Activated naive CD4-positive, alpha-beta T cell treated with anti-CD3 and anti-CD28 coated beads for 36 hours (primary cell): ENCODE measurements at regions of chr5 and their contacts with region 1.

Region 1: DNA sequence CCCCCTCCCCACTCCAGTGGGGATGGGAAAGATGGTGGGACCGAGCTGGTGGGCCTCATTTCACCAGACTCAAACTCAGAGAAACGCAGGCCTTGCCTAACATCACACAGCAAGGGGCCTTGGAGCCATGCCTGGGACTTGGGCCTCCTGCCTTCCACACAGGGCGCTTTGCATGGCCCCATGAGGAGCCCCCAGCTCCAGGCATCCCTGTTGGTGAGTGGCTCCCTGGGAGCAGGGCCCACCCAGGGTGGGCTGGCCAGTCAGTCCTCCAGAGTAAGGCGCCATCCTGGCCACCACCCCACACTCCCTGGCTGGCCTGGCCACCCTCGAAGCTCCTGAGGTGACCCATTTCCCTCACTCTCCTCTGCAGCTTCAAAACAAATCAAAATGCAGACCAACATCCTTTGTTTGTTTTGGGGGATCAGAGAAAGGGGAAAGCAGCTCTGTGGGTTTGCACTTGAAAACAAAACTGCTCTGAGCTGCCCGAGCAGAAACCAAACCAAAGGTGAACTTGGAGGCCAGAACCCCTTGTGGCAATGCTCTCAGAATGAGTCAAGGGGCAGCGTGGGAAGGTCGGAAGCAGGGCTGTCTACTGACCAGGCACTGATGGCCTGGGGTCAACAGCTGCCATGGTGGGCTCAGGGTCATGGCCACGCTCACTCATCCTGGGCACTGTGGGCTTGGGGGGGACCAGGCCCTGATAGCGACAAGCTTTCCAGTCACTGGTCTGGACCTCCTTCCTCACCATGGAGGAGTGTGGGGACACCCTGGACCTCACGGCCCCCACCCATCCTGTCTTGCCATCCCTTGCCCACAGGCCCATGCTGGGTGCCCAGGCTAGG is 37.0 kb upstream of the VDAC1 start:
- DNase-seq: no peak
- H3K4me3 Mint-ChIP-seq: no peak overlapping the region
- H3K27ac Mint-ChIP-seq: no peak overlapping the region
- H3K4me1 Mint-ChIP-seq: peaks cover 51% of the 10 kb centered on the region
- H3K27me3 Mint-ChIP-seq: no peaks in the 10 kb centered on the region

Region 2: DNA sequence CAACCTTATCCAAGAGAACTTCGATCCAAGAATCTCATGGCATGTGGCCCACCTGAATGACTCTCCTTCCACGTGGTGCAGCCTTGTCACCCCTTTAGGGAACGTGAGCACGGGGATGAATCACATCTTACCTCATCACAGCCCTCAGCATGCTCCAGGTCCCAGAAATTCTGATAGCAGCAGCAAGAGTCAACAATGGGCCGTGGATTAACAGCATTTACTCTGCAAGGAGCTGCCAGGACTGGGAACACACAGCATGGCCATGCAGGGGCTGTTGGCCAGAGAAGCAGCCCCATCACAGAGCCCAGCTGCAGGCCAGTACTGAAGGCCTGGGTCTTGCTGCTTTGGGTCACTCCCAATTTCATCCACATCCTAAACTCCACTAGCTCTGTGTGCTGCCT is 223.8 kb before region 1 on chr5:
- CTCF ChIA-PET with region 1: no interaction called
- intact Hi-C with region 1: no loop called
- DNase-seq: no peak
- H3K4me3 Mint-ChIP-seq: no peak overlapping the region
- H3K27ac Mint-ChIP-seq: no peak overlapping the region
- H3K4me1 Mint-ChIP-seq: no peaks in the 10 kb centered on the region
- H3K27me3 Mint-ChIP-seq: peaks cover 5% of the 10 kb centered on the region

Region 3: DNA sequence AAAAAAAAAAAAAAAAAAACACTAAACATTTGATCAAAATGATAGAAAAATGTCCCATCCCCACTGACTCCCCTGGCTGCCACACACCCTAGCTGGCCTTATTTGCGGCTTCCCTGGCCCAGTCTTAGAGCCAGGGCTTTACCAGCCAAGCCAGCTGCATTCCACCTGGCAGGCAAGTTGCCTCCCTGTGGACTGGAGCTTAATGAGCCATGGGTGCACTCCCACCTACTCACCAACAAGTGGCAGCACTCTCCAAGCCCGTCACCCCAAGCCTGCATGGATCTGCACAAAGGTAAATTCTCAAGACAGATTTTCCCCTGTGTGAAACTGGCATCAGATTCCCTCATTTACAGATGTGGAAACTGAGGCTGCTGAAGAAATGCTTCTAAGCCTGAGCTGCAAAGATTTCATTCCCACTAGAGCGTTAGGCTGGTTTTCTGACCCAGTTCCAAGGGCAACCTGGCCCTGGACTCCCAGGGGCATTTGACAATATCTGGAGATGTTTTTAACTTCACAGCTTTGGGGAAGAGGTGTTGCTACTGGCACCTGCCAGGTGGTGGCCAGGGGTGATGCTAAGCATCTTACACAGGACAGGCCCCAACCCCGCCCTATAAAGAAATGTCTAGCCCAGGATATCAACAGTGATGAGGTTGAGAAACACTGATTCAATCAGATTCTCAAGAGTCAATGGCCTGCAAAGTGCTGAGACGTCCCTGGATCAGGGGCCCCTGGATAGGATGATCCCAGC is 15.1 kb before region 1 on chr5:
- CTCF ChIA-PET with region 1: interaction called, 23 read pairs
- intact Hi-C with region 1: no loop called
- DNase-seq: peak; percentile 75
- H3K4me3 Mint-ChIP-seq: no peak overlapping the region
- H3K27ac Mint-ChIP-seq: no peak overlapping the region
- H3K4me1 Mint-ChIP-seq: peaks cover 1% of the 10 kb centered on the region
- H3K27me3 Mint-ChIP-seq: no peaks in the 10 kb centered on the region

Region 4: DNA sequence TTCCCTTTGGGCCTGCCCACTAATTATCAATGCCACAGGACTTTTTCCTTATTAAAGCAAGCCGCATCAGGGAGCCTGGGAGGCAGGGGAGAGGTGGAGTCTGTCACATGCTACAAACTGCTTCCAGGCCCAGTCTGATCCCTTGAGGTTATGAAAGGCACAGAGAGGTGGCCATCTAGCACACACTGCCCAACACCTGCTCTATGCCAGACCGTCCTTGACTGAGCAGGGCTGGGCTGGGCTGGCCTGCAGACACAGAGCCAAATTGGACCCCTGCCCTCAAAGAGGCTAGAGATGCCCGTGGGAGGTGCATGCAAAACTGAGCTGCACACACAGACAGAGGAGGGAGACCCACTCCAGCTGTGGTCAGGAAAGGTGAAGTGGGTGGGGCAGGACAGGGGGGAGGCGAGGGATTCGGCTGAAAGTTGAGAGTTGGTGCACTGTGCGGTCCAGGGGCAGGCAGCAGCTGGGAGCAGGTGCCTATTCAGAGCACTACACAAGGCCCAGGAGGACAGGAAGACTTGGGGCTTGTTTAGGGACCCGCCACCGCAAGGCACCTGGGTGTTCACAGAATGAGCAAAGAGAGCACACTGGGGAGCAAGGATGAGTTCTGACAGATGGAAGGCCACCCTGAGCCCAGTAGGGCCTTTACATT is 36.3 kb after region 1 on chr5:
- CTCF ChIA-PET with region 1: interaction called, 37 read pairs
- intact Hi-C with region 1: no loop called
- DNase-seq: peak; percentile 76
- H3K4me3 Mint-ChIP-seq: no peak overlapping the region
- H3K27ac Mint-ChIP-seq: peak overlapping the region; percentile 96
- H3K4me1 Mint-ChIP-seq: peaks cover 74% of the 10 kb centered on the region
- H3K27me3 Mint-ChIP-seq: no peaks in the 10 kb centered on the region

Region 5: GRCh38 chr5:134113902-134114875 is 72.4 kb after region 1 on chr5 and contains the start of gene TCF7:
- CTCF ChIA-PET with region 1: interaction called, 269 read pairs
- intact Hi-C with region 1: loop called (anchors 1 kb)
- DNase-seq: peak; percentile 81
- H3K4me3 Mint-ChIP-seq: peak within 1 kb of the TSS; percentile 81
- H3K27ac Mint-ChIP-seq: peak within 1 kb of the TSS; percentile 91
- H3K4me1 Mint-ChIP-seq: peaks cover 64% of the 10 kb centered on the region
- H3K27me3 Mint-ChIP-seq: no peaks in the 10 kb centered on the region
- total RNA-seq, gene TCF7: 87.9 to 92.3 TPM

Region 6: DNA sequence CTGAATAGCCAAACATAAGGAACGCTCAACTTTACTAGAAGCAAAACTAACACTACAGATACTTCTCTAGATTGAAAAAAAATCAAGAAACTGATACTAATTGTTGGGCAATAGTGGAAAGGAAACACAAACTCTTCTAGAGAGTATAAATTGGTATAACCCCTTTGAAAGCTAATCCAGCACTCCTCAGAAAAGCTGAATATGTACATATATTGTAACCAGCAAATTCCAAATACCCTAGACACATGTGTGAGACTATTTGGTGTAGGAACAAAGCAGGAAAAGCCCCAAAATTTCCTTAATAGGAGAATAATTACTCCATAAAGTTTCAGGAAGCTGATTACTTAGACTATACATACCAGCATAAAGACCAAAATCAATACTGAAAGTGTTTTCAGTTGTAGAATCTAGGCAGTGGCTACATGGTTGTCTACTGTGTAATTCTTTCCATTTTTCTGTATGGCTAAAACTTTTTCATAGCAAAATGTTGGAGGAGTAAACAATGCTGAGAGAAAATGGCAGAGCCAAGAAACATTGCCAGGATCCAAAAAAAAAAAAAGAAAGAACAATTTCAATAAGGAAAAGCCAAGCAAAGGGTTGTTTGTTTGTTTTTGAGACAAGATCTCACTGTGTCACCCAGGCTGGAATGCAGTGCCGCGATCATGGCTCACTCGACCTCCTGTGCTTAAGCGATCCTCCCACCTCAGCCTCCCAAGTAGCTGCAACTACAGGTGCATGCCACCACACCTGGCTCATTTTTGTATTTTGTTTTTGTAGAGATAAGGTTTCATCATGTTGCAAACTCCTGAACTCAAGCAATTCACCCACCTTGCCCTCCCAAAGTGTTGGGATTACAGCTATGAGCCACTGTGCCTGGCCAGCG is 120.0 kb after region 1 on chr5:
- CTCF ChIA-PET with region 1: interaction called, 593 read pairs
- intact Hi-C with region 1: no loop called
- DNase-seq: no peak
- H3K4me3 Mint-ChIP-seq: no peak overlapping the region
- H3K27ac Mint-ChIP-seq: peak overlapping the region; percentile 50
- H3K4me1 Mint-ChIP-seq: peaks cover 58% of the 10 kb centered on the region
- H3K27me3 Mint-ChIP-seq: no peaks in the 10 kb centered on the region

Region 7: DNA sequence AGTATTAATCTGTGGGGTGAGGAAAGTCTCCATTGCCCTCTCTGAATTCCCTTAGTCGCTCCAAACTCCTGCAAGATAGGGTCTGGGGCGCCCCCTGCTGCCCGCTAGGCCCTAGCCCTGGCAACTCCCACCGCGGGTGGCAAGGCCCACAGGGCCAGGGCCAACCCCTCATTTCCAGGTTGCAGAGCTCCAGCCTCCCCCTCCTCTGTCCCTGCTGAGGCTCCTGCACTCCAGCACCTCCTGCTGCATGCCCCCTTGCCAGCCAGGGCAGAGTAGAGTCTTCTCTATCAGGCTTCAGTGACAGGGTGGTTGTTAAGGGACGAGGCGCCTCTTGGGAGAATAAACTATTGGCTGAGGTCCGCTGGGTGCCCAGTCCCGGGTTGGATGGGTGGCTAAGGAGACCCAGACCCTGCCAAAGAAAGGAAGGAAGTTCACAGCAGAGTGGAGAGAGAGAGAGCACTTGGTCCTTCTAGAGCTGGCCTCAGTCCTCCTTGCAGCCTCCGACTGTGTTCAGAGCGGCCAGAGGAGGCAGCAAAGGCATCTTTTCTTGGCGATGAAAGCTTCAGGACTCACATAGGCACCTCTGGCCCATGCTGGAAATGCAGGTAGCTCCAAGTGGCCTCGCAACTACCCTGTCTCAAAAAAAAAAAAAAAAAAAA is 545.2 kb after region 1 on chr5:
- CTCF ChIA-PET with region 1: interaction called, 5 read pairs
- intact Hi-C with region 1: loop called (anchors 1 kb)
- DNase-seq: peak; percentile 94
- H3K4me3 Mint-ChIP-seq: no peak overlapping the region
- H3K27ac Mint-ChIP-seq: no peak overlapping the region
- H3K4me1 Mint-ChIP-seq: peaks cover 13% of the 10 kb centered on the region
- H3K27me3 Mint-ChIP-seq: no peaks in the 10 kb centered on the region